Activated CD4-positive, alpha-beta memory T cell treated with anti-CD3 and anti-CD28 coated beads, Interleukin-2, amount 10 ng/mL, durations not matched to agents 7 days and 5 days (primary cell): ENCODE measurements at regions of chr15 and their contacts with region 1.

Region 1: GRCh38 chr15:52018693-52019387 is at the start of gene MAPK6:
- DNase-seq: peak; percentile 94
- H3K4me3 Mint-ChIP-seq: peak within 1 kb of the TSS; percentile 97
- H3K27ac Mint-ChIP-seq: peak within 1 kb of the TSS; percentile 100
- H3K4me1 Mint-ChIP-seq: peaks cover 46% of the 10 kb centered on the region
- H3K27me3 Mint-ChIP-seq: peaks cover 4% of the 10 kb centered on the region
- total RNA-seq, gene MAPK6: 44.9 to 47.9 TPM

Region 2: DNA sequence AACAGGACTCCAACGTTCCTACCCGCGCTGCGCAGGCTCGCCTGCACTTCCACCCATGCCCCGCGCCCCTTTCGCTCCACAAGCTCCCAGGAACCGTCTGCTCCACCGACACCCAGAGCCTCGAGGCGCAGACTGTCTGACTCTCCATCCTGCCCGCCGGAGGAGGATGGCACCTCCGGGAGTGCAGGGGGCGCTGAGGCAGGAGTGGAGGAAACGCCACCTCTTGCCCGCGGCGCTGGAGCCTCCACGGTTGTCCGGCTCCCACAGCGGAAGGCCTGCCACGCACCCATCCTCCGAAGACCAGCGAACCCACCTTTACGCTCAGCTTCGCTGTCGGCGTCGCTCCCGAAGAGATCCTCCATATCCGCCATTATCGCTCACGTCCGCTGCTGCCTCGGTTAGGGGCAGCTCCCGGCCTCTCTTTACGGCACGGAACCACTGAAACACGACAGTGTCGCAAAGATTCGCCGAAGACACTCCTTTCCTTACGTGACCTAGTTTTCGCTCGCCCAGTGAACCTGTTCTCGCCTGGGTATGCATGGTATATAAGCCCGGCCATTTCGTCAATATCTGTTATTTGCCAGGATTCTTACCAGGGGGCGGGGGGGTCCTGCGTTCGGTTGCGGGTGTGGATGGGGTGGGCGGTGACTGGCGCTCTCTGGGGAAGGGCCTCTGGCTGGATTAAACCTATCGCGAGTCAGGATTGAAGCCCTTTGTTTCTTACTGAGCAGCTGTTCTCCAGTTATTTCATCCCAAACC is 47.3 kb before region 1 on chr15 and contains the start of gene LEO1:
- CTCF ChIA-PET with region 1: no interaction called
- POLR2A ChIA-PET with region 1: interaction called, 24 read pairs
- DNase-seq: peak; percentile 92
- H3K4me3 Mint-ChIP-seq: peak within 1 kb of the TSS; percentile 93
- H3K27ac Mint-ChIP-seq: peak within 1 kb of the TSS; percentile 87
- H3K4me1 Mint-ChIP-seq: peaks cover 33% of the 10 kb centered on the region
- H3K27me3 Mint-ChIP-seq: no peaks in the 10 kb centered on the region
- total RNA-seq, gene LEO1: 31.2 to 32.8 TPM

Region 3: GRCh38 chr15:52005748-52006701 is 12.8 kb before region 1 on chr15:
- CTCF ChIA-PET with region 1: interaction called, 6 read pairs
- POLR2A ChIA-PET with region 1: interaction called, 56 read pairs
- DNase-seq: peak; percentile 24
- H3K4me3 Mint-ChIP-seq: peak overlapping the region; percentile 40
- H3K27ac Mint-ChIP-seq: peak overlapping the region; percentile 77
- H3K4me1 Mint-ChIP-seq: peaks cover 66% of the 10 kb centered on the region
- H3K27me3 Mint-ChIP-seq: no peaks in the 10 kb centered on the region

Region 4: DNA sequence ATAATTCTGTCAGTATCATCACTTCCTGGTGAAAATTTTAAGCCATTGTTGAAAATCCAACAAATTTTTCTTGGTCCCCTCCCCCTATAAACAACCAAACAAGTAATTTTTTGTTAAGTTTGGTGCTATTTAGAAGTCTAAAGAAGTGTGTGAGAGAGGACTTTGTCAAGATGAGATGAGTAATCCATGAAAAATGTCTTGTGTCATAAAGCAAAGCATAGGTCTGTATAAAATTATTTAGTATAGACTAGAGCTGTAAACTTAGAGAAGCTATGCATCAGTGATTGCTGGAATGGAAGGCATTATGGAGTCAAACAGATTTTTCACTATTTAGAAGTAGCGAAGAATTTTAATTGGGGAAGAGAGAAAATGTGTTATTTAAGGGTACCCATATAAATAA is 31.6 kb after region 1 on chr15:
- CTCF ChIA-PET with region 1: interaction called, 10 read pairs
- POLR2A ChIA-PET with region 1: interaction called, 38 read pairs
- DNase-seq: no peak
- H3K4me3 Mint-ChIP-seq: no peak overlapping the region
- H3K27ac Mint-ChIP-seq: no peak overlapping the region
- H3K4me1 Mint-ChIP-seq: peaks cover 19% of the 10 kb centered on the region
- H3K27me3 Mint-ChIP-seq: no peaks in the 10 kb centered on the region

Region 5: GRCh38 chr15:52179278-52180195 is 160.7 kb after region 1 on chr15:
- CTCF ChIA-PET with region 1: no interaction called
- POLR2A ChIA-PET with region 1: interaction called, 15 read pairs
- DNase-seq: peak; percentile 91
- H3K4me3 Mint-ChIP-seq: peak overlapping the region; percentile 89
- H3K27ac Mint-ChIP-seq: peak overlapping the region; percentile 91
- H3K4me1 Mint-ChIP-seq: peaks cover 37% of the 10 kb centered on the region
- H3K27me3 Mint-ChIP-seq: no peaks in the 10 kb centered on the region